ENCODE measurements at regions of chr17 and their contacts with region 1.

Region 1: DNA sequence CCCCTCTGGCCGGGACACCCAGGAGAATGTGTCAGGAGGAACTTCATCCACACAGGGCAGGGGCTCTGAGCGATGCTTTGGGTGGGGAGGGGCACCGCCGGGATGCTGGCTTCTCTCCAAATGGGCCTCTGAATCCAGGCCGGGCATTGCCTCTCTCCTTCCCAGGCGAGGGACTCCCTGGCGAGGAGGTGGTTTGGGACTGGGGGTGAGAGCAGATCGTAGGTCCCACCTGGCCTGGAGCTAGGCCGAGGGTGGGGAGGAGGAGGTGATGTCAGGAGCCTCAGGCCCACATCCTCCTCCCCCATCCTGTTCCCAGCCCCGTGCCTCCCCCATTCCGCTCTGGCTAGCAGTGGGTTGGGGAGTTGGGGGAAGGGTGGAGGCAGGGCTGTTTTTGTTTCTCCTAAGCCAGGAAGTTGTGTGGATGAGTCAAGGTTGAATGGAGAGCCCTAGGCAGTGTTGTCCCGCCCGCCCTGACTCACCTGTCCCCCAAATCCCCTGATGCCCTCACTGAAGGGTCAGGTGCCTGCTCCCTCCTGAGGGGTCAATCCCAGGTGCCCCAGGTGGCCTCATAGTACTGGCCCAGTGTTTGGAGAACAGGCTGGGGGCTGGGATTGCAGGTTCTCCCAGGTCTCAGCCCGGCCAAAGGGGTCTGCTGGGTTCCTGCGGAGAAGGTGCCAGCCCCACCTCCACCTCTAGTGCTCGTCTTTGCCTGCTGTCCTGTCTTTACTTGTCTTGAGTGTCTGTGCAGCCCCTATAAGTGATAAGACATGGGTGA is 2.8 kb downstream of the GRB7 start:
- DNase-seq: peak; percentile 60
- H3K4me3 ChIP-seq: peak overlapping the region in 3 of 4 donors; percentile 42 to 63 (median 50)
- H3K27ac ChIP-seq: peak overlapping the region; percentile 83 to 92 (median 90)
- H3K4me1 ChIP-seq: peaks cover 5 to 55% (median 32%) of the 10 kb centered on the region in 4 donors
- H3K27me3 ChIP-seq: peaks cover 39% of the 10 kb centered on the region
- CTCF ChIP-seq: no peak
- EP300 ChIP-seq: no peak
- POLR2A ChIP-seq: peak; percentile 29

Region 2: DNA sequence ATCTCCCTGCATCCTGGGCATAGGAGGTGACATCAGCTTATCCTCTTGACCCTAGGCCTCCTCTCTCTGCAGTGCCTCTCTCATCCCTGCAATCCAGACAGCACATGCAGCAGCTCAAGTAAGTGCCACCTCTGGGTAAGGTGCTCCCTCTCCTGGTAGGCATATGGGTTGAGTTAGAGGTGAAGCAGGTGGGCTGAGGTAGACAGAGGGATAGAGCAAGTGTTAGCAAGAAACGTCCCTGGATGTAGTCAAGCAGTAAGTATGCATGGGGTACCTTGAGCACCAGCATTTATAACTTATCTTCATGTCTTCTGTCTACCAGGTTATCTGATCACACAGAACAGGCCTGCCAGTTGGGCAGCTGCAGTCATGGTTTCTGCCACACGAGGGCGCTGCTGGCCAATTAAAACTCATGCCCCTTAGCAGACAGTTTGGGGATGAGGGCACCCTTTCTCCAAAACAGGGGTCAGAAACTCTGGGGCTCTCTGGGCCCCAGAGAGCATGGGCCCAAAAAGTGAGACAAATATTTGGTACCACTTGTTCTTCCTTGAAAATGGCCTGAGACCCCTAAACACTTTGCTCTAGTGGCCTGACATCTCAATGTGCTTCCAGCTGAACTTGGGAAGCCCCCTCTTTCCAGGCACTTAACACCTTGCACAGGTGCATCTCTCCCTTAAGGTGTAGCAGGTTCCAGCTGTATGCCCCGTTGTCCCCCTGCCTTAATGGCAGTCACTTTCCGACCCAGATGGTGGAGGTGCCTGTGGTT is 192.6 kb before region 1 on chr17:
- in situ Hi-C with region 1: no loop called
- intact Hi-C with region 1: loop called (anchors 10 kb)
- DNase-seq: peak; percentile 68
- H3K4me3 ChIP-seq: no peak overlapping the region
- H3K27ac ChIP-seq: no peak overlapping the region
- H3K4me1 ChIP-seq: no peaks in the 10 kb centered on the region
- H3K27me3 ChIP-seq: no peaks in the 10 kb centered on the region
- CTCF ChIP-seq: peak; percentile 84 to 93 (median 88)
- EP300 ChIP-seq: no peak
- POLR2A ChIP-seq: no peak

Region 3: GRCh38 chr17:39777534-39778365 is 37.2 kb after region 1 on chr17:
- in situ Hi-C with region 1: no loop called
- intact Hi-C with region 1: no loop called
- DNase-seq: no peak
- H3K4me3 ChIP-seq: peak overlapping the region in 2 of 4 donors; percentile 2 to 14
- H3K27ac ChIP-seq: peak overlapping the region; percentile 23 to 75 (median 45)
- H3K4me1 ChIP-seq: no peaks in the 10 kb centered on the region
- H3K27me3 ChIP-seq: peaks cover 4% of the 10 kb centered on the region
- CTCF ChIP-seq: no peak
- EP300 ChIP-seq: no peak
- POLR2A ChIP-seq: no peak

Region 4: DNA sequence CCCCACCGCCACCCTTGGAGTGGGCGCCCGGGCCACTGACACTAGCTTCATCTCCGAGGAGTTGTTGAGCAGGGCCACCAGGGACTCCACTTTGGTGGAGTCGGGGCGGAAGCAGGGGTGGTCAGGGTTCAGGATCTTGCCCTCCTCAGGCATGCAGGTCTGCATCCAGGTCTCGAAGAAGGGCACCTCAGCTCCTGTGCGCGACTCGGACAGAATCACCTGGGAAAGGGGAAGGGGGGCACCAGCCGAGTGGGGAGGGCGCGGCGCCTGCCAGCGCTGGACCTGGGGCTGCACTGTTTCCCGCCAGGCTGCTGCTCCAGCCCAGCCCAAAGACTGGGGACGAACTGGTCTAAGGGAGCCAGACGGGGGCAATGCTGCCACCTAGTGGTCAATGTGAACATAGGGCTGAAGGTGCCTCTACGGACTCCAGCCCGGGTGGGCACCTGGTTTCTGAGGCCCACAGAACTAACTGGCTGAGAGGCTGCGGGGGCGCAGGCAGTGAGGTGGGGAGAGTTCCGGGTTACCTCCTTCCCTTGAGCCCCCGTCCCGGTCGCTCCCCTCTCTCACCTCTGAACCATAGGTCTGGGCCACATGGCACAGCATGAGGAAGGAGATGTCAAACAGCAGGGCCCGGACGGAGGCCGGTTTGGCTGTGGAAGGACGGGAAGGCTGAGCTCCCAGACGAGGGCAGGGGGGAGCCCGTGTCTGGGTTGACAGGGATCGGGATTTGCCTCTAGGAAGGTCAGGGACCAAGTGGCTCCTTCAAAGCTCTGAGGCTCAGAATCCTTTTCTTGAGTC is 286.5 kb after region 1 on chr17:
- in situ Hi-C with region 1: no loop called
- intact Hi-C with region 1: no loop called
- DNase-seq: peak; percentile 88
- H3K4me3 ChIP-seq: no peak overlapping the region
- H3K27ac ChIP-seq: peak overlapping the region in 1 of 4 donors; percentile 80
- H3K4me1 ChIP-seq: peaks cover 10 to 51% (median 49%) of the 10 kb centered on the region in 4 donors
- H3K27me3 ChIP-seq: no peaks in the 10 kb centered on the region
- CTCF ChIP-seq: peak; percentile 92 to 96 (median 94)
- EP300 ChIP-seq: no peak
- POLR2A ChIP-seq: no peak

Measured in transverse colon (tissue), 4 donors.